Caco-2 (cell line): ENCODE measurements at regions of chr12 and their contacts with region 1.

Region 1: GRCh38 chr12:63802012-63802608 is 22.4 kb downstream of the RXYLT1 start:
- DNase-seq: peak in 1 of 2 experiments; percentile 17
- H3K4me3 ChIP-seq: no peak overlapping the region
- H3K4me3 Mint-ChIP-seq: no peak overlapping the region
- H3K27ac Mint-ChIP-seq: no peak overlapping the region
- H3K4me1 ChIP-seq: no peaks in the 10 kb centered on the region
- H3K4me1 Mint-ChIP-seq: no peaks in the 10 kb centered on the region
- H3K27me3 ChIP-seq: no peaks in the 10 kb centered on the region
- H3K27me3 Mint-ChIP-seq: no peaks in the 10 kb centered on the region
- CTCF ChIP-seq: peak; percentile 36 to 52

Region 2: GRCh38 chr12:63420206-63420644 is 381.9 kb before region 1 on chr12:
- CTCF ChIA-PET with region 1: no interaction called
- POLR2A ChIA-PET with region 1: no interaction called
- intact Hi-C with region 1: loop called (anchors 1 kb)
- DNase-seq: peak; percentile 45 to 58
- H3K4me3 ChIP-seq: no peak overlapping the region
- H3K4me3 Mint-ChIP-seq: no peak overlapping the region
- H3K27ac Mint-ChIP-seq: no peak overlapping the region
- H3K4me1 ChIP-seq: no peaks in the 10 kb centered on the region
- H3K4me1 Mint-ChIP-seq: peaks cover 7% of the 10 kb centered on the region
- H3K27me3 ChIP-seq: no peaks in the 10 kb centered on the region
- H3K27me3 Mint-ChIP-seq: peaks cover 9% of the 10 kb centered on the region
- CTCF ChIP-seq: peak; percentile 57 to 64

Region 3: GRCh38 chr12:63668028-63668799 is 133.9 kb before region 1 on chr12 and contains the start of gene DPY19L2:
- CTCF ChIA-PET with region 1: no interaction called
- POLR2A ChIA-PET with region 1: no interaction called
- intact Hi-C with region 1: loop called (anchors 2 kb)
- DNase-seq: no peak
- H3K4me3 ChIP-seq: no peak within 1 kb of the TSS
- H3K4me3 Mint-ChIP-seq: no peak within 1 kb of the TSS
- H3K27ac Mint-ChIP-seq: no peak within 1 kb of the TSS
- H3K4me1 ChIP-seq: no peaks in the 10 kb centered on the region
- H3K4me1 Mint-ChIP-seq: no peaks in the 10 kb centered on the region
- H3K27me3 ChIP-seq: no peaks in the 10 kb centered on the region
- H3K27me3 Mint-ChIP-seq: peaks cover 9% of the 10 kb centered on the region
- CTCF ChIP-seq: no peak
- total RNA-seq, gene DPY19L2: not detected in 2 replicates